ENCODE measurements at regions of chr7 and their contacts with region 1.

Region 1: GRCh38 chr7:97145068-97145467 is 27.6 kb downstream of the SDHAF3 start:
- DNase-seq: peak; percentile 32
- ATAC-seq: no peak
- H3K4me3 ChIP-seq: no peak overlapping the region
- H3K27ac ChIP-seq: no peak overlapping the region
- H3K4me1 ChIP-seq: no peaks in the 10 kb centered on the region
- H3K27me3 ChIP-seq: no peaks in the 10 kb centered on the region
- CTCF ChIP-seq: peak; percentile 36
- EP300 ChIP-seq: no peak
- POLR2A ChIP-seq: no peak
- RAD21 ChIP-seq: 0 out of 2 replicates have a peak, but pooled peaks have one; percentile 16

Region 2: GRCh38 chr7:97179454-97180104 is 34.5 kb after region 1 on chr7:
- CTCF ChIA-PET with region 1: interaction called, 13 read pairs
- POLR2A ChIA-PET with region 1: no interaction called
- in situ Hi-C with region 1: no loop called
- intact Hi-C with region 1: loop called (anchors 1 kb)
- DNase-seq: peak; percentile 70
- ATAC-seq: peak; percentile 76
- H3K4me3 ChIP-seq: no peak overlapping the region
- H3K27ac ChIP-seq: no peak overlapping the region
- H3K4me1 ChIP-seq: no peaks in the 10 kb centered on the region
- H3K27me3 ChIP-seq: no peaks in the 10 kb centered on the region
- CTCF ChIP-seq: peak; percentile 74
- EP300 ChIP-seq: no peak
- POLR2A ChIP-seq: no peak
- RAD21 ChIP-seq: no peak

Region 3: GRCh38 chr7:97499204-97499603 is 354.1 kb after region 1 on chr7:
- CTCF ChIA-PET with region 1: no interaction called
- POLR2A ChIA-PET with region 1: no interaction called
- in situ Hi-C with region 1: no loop called
- intact Hi-C with region 1: loop called (anchors 10 kb)
- DNase-seq: peak; percentile 27
- ATAC-seq: peak; percentile 73
- H3K4me3 ChIP-seq: no peak overlapping the region
- H3K27ac ChIP-seq: no peak overlapping the region
- H3K4me1 ChIP-seq: no peaks in the 10 kb centered on the region
- H3K27me3 ChIP-seq: no peaks in the 10 kb centered on the region
- CTCF ChIP-seq: peak; percentile 60
- EP300 ChIP-seq: no peak
- POLR2A ChIP-seq: no peak
- RAD21 ChIP-seq: no peak

Region 4: DNA sequence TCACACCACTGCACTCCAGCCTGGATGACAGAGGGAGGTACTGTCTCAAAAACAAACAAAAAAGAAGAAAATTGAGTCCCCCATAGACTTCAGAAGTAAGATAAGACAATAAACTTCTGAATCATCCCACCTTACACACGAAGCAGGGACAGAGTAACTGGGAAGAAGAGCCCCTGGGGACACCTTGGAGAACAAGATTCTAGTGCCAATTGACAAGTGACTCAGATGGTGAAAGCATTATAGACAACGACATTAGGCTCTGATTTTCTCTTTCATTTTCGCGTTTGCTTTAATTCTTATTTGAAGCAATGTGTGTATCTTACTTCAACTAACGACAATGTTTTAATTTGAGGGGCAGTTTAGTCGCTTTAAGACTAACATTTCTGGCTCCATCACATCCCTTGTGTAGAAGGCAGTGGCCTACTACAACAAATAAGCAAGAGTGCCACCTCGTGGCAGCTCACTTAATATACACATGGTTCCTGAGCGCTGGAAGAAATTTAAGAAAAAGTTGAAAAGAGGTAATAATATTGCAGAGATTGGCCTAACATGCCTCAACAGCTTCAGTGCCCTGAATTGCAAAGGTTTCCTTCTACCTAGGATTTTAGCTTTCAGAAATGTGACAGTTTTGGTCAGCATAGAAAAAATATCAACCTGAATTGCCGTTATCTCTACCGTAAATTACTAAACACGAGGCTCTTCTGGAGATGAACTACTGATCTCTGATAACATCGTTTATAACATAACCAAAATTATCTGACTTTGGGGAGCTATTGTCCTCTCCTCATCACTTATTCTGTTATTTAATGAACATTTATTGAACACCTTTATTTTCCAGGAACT is 690.4 kb after region 1 on chr7:
- CTCF ChIA-PET with region 1: no interaction called
- POLR2A ChIA-PET with region 1: no interaction called
- in situ Hi-C with region 1: no loop called
- intact Hi-C with region 1: loop called (anchors 1 kb)
- DNase-seq: peak; percentile 53
- ATAC-seq: peak; percentile 88
- H3K4me3 ChIP-seq: no peak overlapping the region
- H3K27ac ChIP-seq: no peak overlapping the region
- H3K4me1 ChIP-seq: no peaks in the 10 kb centered on the region
- H3K27me3 ChIP-seq: no peaks in the 10 kb centered on the region; a peak in 2 of 5 replicates
- CTCF ChIP-seq: peak; percentile 77
- EP300 ChIP-seq: no peak
- POLR2A ChIP-seq: no peak
- RAD21 ChIP-seq: peak; percentile 16; the same call in 1 of the 2 replicates

Measured in HepG2 (cell line).